SK-N-SH (cell line): ENCODE measurements at regions of chr11 and their contacts with region 1.

Region 1: DNA sequence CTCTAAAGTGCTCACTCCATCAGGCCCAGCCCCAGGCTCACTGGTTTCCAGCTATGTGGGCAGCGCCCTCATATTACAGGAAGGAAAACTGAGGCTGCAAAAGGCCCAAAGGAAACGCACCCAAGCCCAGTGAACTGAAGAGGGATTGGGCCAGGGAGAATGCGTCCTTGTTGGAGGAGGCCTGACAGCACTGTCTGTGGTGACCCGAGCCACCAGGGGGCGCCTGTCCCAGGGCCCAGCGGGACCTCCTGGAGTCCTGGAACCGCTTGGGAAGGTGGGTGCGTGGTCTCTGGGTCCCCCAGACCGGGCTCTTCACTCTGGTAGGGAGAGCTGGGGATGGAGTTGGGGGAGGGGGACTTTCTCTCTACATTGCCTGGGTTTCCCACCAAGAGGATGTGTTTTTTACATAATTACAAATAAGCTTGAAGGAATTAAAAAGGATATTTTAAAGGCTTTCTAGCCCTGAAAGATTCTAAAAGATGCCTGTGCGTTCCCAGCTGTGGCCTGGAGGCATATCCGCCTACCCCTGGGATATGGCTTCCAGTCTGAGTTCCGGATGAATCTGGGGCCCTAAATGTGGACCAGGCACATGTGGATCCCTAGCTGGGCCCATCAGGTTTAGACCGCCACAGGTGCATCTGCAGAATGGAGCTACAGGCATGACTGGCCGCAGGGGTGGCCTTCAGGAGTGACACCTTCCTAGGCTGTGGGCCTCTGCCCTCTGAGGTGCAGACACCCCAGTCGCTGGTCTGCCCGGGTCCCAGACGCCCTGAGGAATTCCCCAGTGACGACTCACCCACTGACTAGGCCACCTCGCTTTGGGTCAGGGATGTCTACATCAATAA is 4.2 kb downstream of the SPI1 start:
- DNase-seq: peak; percentile 92
- H3K4me3 ChIP-seq: no peak overlapping the region
- H3K27ac ChIP-seq: no peak overlapping the region
- H3K4me1 ChIP-seq: peaks cover 0 to 4% of the 10 kb centered on the region in 2 experiments; a peak in 1 of 4 replicates
- H3K27me3 ChIP-seq: no peaks in the 10 kb centered on the region
- CTCF ChIP-seq: peak; percentile 96
- EP300 ChIP-seq: no peak
- RAD21 ChIP-seq: peak; percentile 77

Region 2: GRCh38 chr11:47394322-47395222 is 20.5 kb after region 1 on chr11:
- CTCF ChIA-PET with region 1: interaction called, 239 read pairs
- POLR2A ChIA-PET with region 1: no interaction called
- DNase-seq: no peak
- H3K4me3 ChIP-seq: no peak overlapping the region
- H3K27ac ChIP-seq: no peak overlapping the region
- H3K4me1 ChIP-seq: peaks cover 3 to 6% of the 10 kb centered on the region in 2 experiments; a peak in 2 of 4 replicates
- H3K27me3 ChIP-seq: no peaks in the 10 kb centered on the region
- CTCF ChIP-seq: no peak
- EP300 ChIP-seq: no peak
- RAD21 ChIP-seq: no peak

Region 3: DNA sequence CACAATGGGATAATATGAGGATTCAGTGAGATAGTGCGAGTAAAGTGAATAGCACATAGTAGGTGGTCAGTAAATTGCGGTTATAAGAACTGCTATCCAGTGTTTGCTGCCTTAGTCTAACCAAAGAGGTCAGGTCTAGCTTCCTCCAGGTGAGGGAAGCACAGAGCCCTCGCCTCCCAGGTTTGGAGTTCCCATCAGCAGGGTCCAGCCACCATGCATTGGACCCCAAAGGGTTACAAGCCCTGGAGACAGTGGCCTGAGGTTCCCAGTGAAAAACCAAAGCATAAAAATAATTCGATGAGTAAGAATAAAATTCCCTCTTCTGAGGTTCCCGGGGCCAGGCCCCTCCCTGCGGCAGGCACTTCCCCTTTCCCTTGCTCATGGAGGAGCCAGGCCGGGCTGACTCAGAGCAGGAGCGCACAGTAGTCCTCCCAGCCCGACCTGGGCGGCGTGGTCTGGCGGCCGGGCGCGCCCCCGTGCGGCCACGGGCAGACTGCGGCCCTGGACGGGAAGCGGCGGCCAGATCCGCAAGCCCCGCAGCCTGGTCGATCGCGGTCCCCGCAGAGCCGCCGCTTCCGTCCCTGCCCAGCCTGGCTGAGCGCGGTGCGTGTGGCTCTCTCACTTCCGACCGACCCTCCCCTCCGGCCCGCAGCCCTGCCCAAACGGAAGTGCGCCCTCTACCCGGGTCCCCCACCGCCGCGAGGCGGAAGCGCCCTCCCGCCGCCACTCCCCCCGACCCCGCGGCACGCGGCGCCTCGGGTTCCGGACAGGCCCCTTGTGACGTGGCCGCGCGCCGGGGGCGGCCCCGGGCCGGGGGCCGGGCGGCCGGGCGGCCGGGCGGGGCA is 33.9 kb after region 1 on chr11 and contains the start of gene SLC39A13:
- CTCF ChIA-PET with region 1: interaction called, 239 read pairs
- POLR2A ChIA-PET with region 1: interaction called, 3 read pairs
- DNase-seq: peak; percentile 99
- H3K4me3 ChIP-seq: peak within 1 kb of the TSS; percentile 64 to 99
- H3K27ac ChIP-seq: peak within 1 kb of the TSS; percentile 95 to 97
- H3K4me1 ChIP-seq: peaks cover 21 to 40% of the 10 kb centered on the region in 2 experiments; a peak in 2 of 4 replicates
- H3K27me3 ChIP-seq: no peaks in the 10 kb centered on the region
- CTCF ChIP-seq: peak; percentile 80
- EP300 ChIP-seq: peak; percentile 44 to 48; a peak in 2 of 4 replicates
- RAD21 ChIP-seq: peak; percentile 78
- polyA plus RNA-seq, gene SLC39A13: 65.5 and 70.7 TPM in 2 replicates

Region 4: GRCh38 chr11:47443042-47443700 is 69.1 kb after region 1 on chr11:
- CTCF ChIA-PET with region 1: interaction called, 11 read pairs
- POLR2A ChIA-PET with region 1: no interaction called
- DNase-seq: peak; percentile 71
- H3K4me3 ChIP-seq: no peak overlapping the region
- H3K27ac ChIP-seq: no peak overlapping the region
- H3K4me1 ChIP-seq: no peaks in the 10 kb centered on the region; a peak in 1 of 4 replicates
- H3K27me3 ChIP-seq: no peaks in the 10 kb centered on the region
- CTCF ChIP-seq: peak; percentile 6; the same call in 1 of the 2 replicates
- EP300 ChIP-seq: no peak
- RAD21 ChIP-seq: no peak

Region 5: DNA sequence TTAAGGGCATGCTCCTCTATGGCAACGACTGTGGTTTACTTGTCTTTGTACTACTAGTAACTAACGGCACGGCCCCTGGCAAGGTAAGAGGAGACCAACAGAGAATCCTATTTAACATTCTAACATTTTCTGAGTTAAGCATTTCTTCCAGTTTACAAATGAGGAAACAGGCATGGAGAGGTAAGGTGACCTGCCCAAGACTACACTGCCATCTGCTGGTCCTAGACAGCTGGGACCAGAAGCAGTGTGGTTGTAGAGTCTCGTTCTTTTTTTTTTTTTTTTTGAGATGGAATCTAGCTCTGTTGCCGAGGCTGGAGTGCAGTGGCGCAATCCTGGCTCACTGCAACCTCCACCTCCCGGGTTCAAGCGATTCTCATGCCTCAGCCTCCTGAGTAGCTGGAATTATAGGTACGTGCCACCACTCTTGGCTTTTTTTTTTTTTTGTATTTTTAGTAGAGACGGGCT is 80.1 kb after region 1 on chr11:
- CTCF ChIA-PET with region 1: interaction called, 22 read pairs
- POLR2A ChIA-PET with region 1: no interaction called
- DNase-seq: peak; percentile 80
- H3K4me3 ChIP-seq: no peak overlapping the region
- H3K27ac ChIP-seq: no peak overlapping the region
- H3K4me1 ChIP-seq: peaks cover 0 to 8% of the 10 kb centered on the region in 2 experiments; a peak in 1 of 4 replicates
- H3K27me3 ChIP-seq: no peaks in the 10 kb centered on the region
- CTCF ChIP-seq: peak; percentile 91
- EP300 ChIP-seq: no peak
- RAD21 ChIP-seq: peak; percentile 82